ENCODE measurements at regions of chr2 and their contacts with region 1.

Region 1: DNA sequence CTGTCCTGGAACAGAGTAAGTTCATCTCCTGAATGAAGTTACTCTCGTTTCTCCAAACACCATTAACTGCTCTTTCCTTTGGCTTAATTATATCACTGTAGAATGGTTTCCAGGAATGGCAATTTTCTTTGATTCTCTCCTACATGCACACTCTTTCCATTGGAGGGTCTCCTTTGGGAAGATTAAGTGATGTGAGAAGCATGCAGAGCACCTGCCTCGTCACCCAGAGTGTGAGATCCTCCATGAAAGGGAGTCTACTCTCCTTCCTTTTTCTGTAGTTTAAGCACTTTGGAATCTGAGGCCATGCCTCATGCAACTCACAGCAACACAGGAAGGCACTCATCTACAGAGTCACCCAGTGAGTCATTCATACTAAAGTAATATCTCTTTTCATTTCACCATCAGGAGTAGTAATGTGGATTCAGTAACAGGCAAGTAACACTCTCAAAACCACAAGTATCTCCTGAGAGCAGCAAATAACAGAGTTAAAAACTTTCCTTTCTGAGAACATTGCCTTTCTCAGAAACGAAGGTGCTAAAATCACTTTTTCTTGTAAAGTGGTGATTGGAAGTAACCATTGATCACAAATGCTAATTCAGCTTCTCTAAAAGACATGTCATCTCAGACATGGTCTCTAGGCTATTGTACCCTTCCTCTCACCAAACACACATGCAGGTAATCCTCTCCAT is 52.8 kb upstream of the IL1RL1 start:
- DNase-seq: peak; percentile 71
- H3K4me3 Mint-ChIP-seq: no peak overlapping the region
- H3K27ac Mint-ChIP-seq: peak overlapping the region; percentile 95
- H3K4me1 Mint-ChIP-seq: peaks cover 46% of the 10 kb centered on the region
- H3K27me3 Mint-ChIP-seq: no peaks in the 10 kb centered on the region

Region 2: GRCh38 chr2:101900375-101900774 is 358.2 kb before region 1 on chr2:
- CTCF ChIA-PET with region 1: no interaction called
- intact Hi-C with region 1: loop called (anchors 1 kb)
- DNase-seq: peak; percentile 87
- H3K4me3 Mint-ChIP-seq: no peak overlapping the region
- H3K27ac Mint-ChIP-seq: peak overlapping the region; percentile 87
- H3K4me1 Mint-ChIP-seq: peaks cover 33% of the 10 kb centered on the region
- H3K27me3 Mint-ChIP-seq: peaks cover 2% of the 10 kb centered on the region

Region 3: DNA sequence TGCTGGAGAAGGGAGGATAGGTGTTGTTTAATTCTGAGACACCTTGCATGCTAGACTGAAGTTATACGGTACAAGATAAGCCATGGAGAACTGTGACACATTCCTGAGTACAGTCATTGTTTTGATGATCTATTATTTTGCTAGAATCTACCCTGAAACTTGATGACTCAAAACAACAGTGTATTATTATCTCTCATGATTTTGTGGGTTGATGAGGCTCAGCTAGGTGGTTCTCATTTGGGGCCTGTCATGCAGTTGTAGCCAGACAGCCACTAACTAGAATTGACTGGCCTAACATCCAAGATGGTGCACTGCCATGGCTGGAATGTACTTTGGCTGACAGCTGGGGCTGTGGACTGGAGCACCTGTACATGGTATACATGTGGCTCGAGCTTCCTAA is 121.4 kb before region 1 on chr2:
- CTCF ChIA-PET with region 1: interaction called, 3 read pairs
- intact Hi-C with region 1: loop called (anchors 1 kb)
- DNase-seq: peak; percentile 72
- H3K4me3 Mint-ChIP-seq: no peak overlapping the region
- H3K27ac Mint-ChIP-seq: peak overlapping the region; percentile 62
- H3K4me1 Mint-ChIP-seq: peaks cover 39% of the 10 kb centered on the region
- H3K27me3 Mint-ChIP-seq: peaks cover 26% of the 10 kb centered on the region

Region 4: GRCh38 chr2:102355526-102356380 is 97.2 kb after region 1 on chr2 and contains the start of gene IL18R1:
- CTCF ChIA-PET with region 1: interaction called, 3 read pairs
- intact Hi-C with region 1: loop called (anchors 1 kb)
- DNase-seq: peak; percentile 74
- H3K4me3 Mint-ChIP-seq: peak within 1 kb of the TSS; percentile 99
- H3K27ac Mint-ChIP-seq: peak within 1 kb of the TSS; percentile 96
- H3K4me1 Mint-ChIP-seq: peaks cover 45% of the 10 kb centered on the region
- H3K27me3 Mint-ChIP-seq: no peaks in the 10 kb centered on the region
- total RNA-seq, gene IL18R1: 17.1 to 18.4 TPM

Region 5: DNA sequence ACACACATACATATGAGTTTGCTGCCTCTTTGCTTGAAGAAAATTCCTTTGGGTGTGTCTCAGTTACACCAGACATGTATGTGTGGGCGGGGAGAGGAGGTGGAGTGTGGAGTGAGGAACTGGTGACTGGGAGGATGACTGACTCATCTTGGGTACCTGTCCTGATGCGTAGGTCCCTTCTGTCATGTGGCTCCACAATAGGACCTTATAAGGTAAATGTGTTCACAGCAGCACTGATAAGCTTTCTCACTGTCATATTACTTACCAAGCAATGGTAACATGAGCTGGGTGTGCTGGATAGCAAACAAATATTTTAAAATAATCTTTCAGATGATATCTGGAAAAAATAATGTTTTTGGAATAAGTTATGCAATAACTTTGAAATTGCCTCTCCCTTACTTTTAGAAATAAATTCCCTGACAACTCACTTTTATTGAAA is 406.0 kb after region 1 on chr2:
- CTCF ChIA-PET with region 1: no interaction called
- intact Hi-C with region 1: loop called (anchors 2 kb)
- DNase-seq: peak; percentile 82
- H3K4me3 Mint-ChIP-seq: no peak overlapping the region
- H3K27ac Mint-ChIP-seq: peak overlapping the region; percentile 10
- H3K4me1 Mint-ChIP-seq: peaks cover 38% of the 10 kb centered on the region
- H3K27me3 Mint-ChIP-seq: no peaks in the 10 kb centered on the region